B cell (primary cell): ENCODE measurements at regions of chr12 and their contacts with region 1.

Region 1: DNA sequence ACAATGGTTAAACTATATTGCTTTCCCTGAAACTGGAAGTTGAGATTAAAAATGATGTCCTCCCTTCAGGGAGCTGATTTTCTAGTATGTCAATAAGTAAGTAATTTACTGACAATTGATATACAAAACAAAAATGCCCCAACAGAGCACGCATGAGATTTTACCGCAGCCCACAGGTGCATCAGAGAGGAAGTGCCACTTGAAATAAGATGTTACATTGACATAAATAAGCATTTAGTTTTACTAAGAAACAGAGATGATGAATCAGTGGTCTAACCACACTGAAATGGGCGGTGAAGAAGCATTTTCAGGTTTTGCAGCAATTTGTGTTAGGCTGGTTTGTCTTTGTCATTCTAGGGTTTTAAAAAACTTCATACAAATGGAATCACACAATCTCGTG is 8.8 kb upstream of the CLECL1 start:
- DNase-seq: peak; percentile 86
- ATAC-seq: peak; percentile 67
- H3K4me3 ChIP-seq: peak overlapping the region in 1 of 5 experiments; percentile 29
- H3K4me3 Mint-ChIP-seq: peak overlapping the region; percentile 81
- H3K27ac ChIP-seq: peak overlapping the region; percentile 36 to 66
- H3K27ac Mint-ChIP-seq: peak overlapping the region; percentile 91
- H3K4me1 ChIP-seq: peaks cover 55 to 64% of the 10 kb centered on the region in 2 donors
- H3K4me1 Mint-ChIP-seq: peaks cover 56% of the 10 kb centered on the region
- H3K27me3 ChIP-seq: no peaks in the 10 kb centered on the region
- H3K27me3 Mint-ChIP-seq: no peaks in the 10 kb centered on the region
- CTCF ChIP-seq: no peak

Region 2: DNA sequence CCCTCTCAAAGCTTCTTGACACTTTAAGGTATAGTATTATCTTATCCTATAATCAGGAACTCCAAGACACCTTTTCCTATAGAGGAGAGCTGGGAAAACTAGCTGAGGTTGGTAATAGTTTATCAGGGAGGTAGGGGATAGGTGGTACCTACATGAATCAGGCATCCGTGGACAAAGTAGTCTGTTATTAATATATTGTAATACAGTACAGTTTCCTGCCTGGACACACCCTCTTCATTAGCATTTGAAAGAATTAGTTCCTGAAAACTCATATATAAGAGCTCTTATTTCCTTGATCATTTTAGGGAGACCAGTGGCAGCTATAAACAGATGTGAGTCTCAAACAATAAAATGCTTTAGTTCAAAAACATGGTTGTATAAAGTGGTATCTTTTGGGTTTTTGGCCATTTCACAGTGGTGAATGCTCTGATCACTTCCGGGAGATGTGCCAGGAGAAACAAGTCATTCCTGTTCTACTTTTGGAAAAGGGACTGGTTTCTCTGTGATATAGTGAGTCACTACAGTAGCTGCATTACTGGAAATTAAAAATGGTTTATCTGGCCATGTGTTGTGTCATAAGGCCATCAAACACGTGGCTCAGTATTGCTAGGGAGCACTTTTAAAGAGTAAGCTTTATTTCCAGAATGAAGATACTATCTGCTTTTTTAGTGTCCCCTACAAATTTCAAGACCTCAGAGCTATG is 232.1 kb before region 1 on chr12:
- CTCF ChIA-PET with region 1: no interaction called
- POLR2A ChIA-PET with region 1: no interaction called
- intact Hi-C with region 1: no loop called
- DNase-seq: no peak
- ATAC-seq: no peak
- H3K4me3 ChIP-seq: no peak overlapping the region
- H3K4me3 Mint-ChIP-seq: peak overlapping the region; percentile 77
- H3K27ac ChIP-seq: peak overlapping the region in 1 of 2 donors; percentile 60
- H3K27ac Mint-ChIP-seq: peak overlapping the region; percentile 94
- H3K4me1 ChIP-seq: peaks cover 0 to 23% of the 10 kb centered on the region in 2 donors
- H3K4me1 Mint-ChIP-seq: peaks cover 26% of the 10 kb centered on the region
- H3K27me3 ChIP-seq: no peaks in the 10 kb centered on the region
- H3K27me3 Mint-ChIP-seq: no peaks in the 10 kb centered on the region
- CTCF ChIP-seq: no peak

Region 3: DNA sequence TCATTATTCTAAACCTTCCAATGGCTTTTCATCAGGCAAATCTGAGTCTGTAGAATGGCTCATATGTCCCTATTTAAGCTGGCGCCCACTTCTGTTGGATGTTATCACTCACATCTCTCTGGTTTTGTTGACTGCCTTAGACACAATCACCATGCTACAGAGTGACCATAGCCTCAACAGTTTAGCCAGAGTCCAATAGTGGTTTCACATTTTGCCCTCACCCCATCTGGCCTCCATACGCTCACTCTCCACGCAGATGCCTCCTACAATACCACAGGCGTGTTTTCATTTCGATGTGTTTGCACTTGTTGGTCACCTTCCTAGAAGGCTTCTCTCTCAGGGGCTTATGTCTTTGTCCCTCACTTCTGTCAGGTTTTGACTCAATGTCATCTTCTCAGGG is 137.4 kb before region 1 on chr12:
- CTCF ChIA-PET with region 1: no interaction called
- POLR2A ChIA-PET with region 1: no interaction called
- intact Hi-C with region 1: no loop called
- DNase-seq: no peak
- ATAC-seq: no peak
- H3K4me3 ChIP-seq: no peak overlapping the region
- H3K4me3 Mint-ChIP-seq: no peak overlapping the region
- H3K27ac ChIP-seq: no peak overlapping the region
- H3K27ac Mint-ChIP-seq: no peak overlapping the region
- H3K4me1 ChIP-seq: no peaks in the 10 kb centered on the region
- H3K4me1 Mint-ChIP-seq: no peaks in the 10 kb centered on the region
- H3K27me3 ChIP-seq: no peaks in the 10 kb centered on the region
- H3K27me3 Mint-ChIP-seq: no peaks in the 10 kb centered on the region
- CTCF ChIP-seq: no peak

Region 4: GRCh38 chr12:9634177-9634803 is 107.4 kb before region 1 on chr12:
- CTCF ChIA-PET with region 1: interaction called, 113 read pairs
- POLR2A ChIA-PET with region 1: interaction called, 3 read pairs
- intact Hi-C with region 1: no loop called
- DNase-seq: peak; percentile 86
- ATAC-seq: peak; percentile 75
- H3K4me3 ChIP-seq: no peak overlapping the region
- H3K4me3 Mint-ChIP-seq: peak overlapping the region; percentile 72
- H3K27ac ChIP-seq: peak overlapping the region; percentile 1 to 82
- H3K27ac Mint-ChIP-seq: peak overlapping the region; percentile 83
- H3K4me1 ChIP-seq: peaks cover 48 to 53% of the 10 kb centered on the region in 2 donors
- H3K4me1 Mint-ChIP-seq: peaks cover 59% of the 10 kb centered on the region
- H3K27me3 ChIP-seq: no peaks in the 10 kb centered on the region
- H3K27me3 Mint-ChIP-seq: no peaks in the 10 kb centered on the region
- CTCF ChIP-seq: peak; percentile 92

Region 5: GRCh38 chr12:9673404-9674225 is 68.1 kb before region 1 on chr12:
- CTCF ChIA-PET with region 1: interaction called, 10 read pairs
- POLR2A ChIA-PET with region 1: no interaction called
- intact Hi-C with region 1: no loop called
- DNase-seq: peak; percentile 56
- ATAC-seq: peak; percentile 32
- H3K4me3 ChIP-seq: peak overlapping the region in 3 of 5 experiments; percentile 63 to 77 (median 69)
- H3K4me3 Mint-ChIP-seq: peak overlapping the region; percentile 91
- H3K27ac ChIP-seq: peak overlapping the region; percentile 28 to 87
- H3K27ac Mint-ChIP-seq: peak overlapping the region; percentile 86
- H3K4me1 ChIP-seq: peaks cover 60 to 70% of the 10 kb centered on the region in 2 donors
- H3K4me1 Mint-ChIP-seq: peaks cover 77% of the 10 kb centered on the region
- H3K27me3 ChIP-seq: no peaks in the 10 kb centered on the region
- H3K27me3 Mint-ChIP-seq: no peaks in the 10 kb centered on the region
- CTCF ChIP-seq: no peak

Region 6: DNA sequence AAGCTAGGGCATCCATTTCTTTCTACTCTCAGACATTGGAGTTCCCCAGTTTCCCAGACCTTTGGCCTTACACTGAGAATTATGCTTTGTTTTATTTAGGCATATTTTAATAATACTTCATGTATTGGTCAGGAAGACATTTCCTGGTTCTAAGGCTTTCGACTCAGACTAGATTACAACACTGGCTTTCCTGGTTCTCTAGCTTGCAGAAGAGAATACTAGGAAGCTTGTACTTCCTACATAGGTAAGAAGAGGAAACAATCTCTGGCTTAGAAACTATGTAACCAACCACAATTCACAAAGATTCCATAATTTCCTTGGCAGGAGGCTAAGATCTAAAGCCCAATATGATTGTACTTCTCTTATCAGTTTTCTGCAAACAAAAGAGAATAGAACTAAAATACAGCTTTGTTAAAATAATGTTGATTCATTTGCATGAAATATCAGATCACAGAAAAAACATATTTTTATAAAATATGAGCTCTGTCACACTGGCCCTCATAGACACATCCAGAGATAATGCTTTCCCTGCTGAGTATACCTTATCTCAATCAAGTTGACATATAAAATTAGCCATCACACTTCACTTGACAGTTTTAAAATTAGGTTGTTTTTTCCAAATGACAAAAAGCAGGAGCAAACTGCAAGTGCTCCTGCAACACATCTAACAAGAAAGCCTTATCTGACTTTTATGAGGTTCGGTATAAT is 41.7 kb before region 1 on chr12:
- CTCF ChIA-PET with region 1: interaction called, 12 read pairs
- POLR2A ChIA-PET with region 1: interaction called, 3 read pairs
- intact Hi-C with region 1: no loop called
- DNase-seq: no peak
- ATAC-seq: no peak
- H3K4me3 ChIP-seq: no peak overlapping the region
- H3K4me3 Mint-ChIP-seq: no peak overlapping the region
- H3K27ac ChIP-seq: peak overlapping the region in 1 of 2 donors; percentile 71
- H3K27ac Mint-ChIP-seq: peak overlapping the region; percentile 71
- H3K4me1 ChIP-seq: peaks cover 38 to 42% of the 10 kb centered on the region in 2 donors
- H3K4me1 Mint-ChIP-seq: peaks cover 66% of the 10 kb centered on the region
- H3K27me3 ChIP-seq: no peaks in the 10 kb centered on the region
- H3K27me3 Mint-ChIP-seq: no peaks in the 10 kb centered on the region
- CTCF ChIP-seq: no peak

Region 7: GRCh38 chr12:9721394-9722092 is 20.2 kb before region 1 on chr12:
- CTCF ChIA-PET with region 1: interaction called, 19 read pairs
- POLR2A ChIA-PET with region 1: interaction called, 9 read pairs
- intact Hi-C with region 1: loop called (anchors 2 kb)
- DNase-seq: peak; percentile 85
- ATAC-seq: peak; percentile 89
- H3K4me3 ChIP-seq: peak overlapping the region in 1 of 5 experiments; percentile 43
- H3K4me3 Mint-ChIP-seq: peak overlapping the region; percentile 60
- H3K27ac ChIP-seq: peak overlapping the region; percentile 88 to 91
- H3K27ac Mint-ChIP-seq: peak overlapping the region; percentile 85
- H3K4me1 ChIP-seq: peaks cover 71 to 94% of the 10 kb centered on the region in 2 donors
- H3K4me1 Mint-ChIP-seq: peaks cover 86% of the 10 kb centered on the region
- H3K27me3 ChIP-seq: no peaks in the 10 kb centered on the region
- H3K27me3 Mint-ChIP-seq: no peaks in the 10 kb centered on the region
- CTCF ChIP-seq: no peak

Region 8: GRCh38 chr12:9760699-9761418 is 19.1 kb after region 1 on chr12 and contains the start of gene CD69:
- CTCF ChIA-PET with region 1: interaction called, 13 read pairs
- POLR2A ChIA-PET with region 1: no interaction called
- intact Hi-C with region 1: no loop called
- DNase-seq: peak; percentile 95
- ATAC-seq: peak; percentile 59
- H3K4me3 ChIP-seq: peak within 1 kb of the TSS; percentile 46 to 100 (median 75)
- H3K4me3 Mint-ChIP-seq: peak within 1 kb of the TSS; percentile 96
- H3K27ac ChIP-seq: peak within 1 kb of the TSS; percentile 89 to 93
- H3K27ac Mint-ChIP-seq: peak within 1 kb of the TSS; percentile 99
- H3K4me1 ChIP-seq: peaks cover 58 to 63% of the 10 kb centered on the region in 2 donors
- H3K4me1 Mint-ChIP-seq: peaks cover 69% of the 10 kb centered on the region
- H3K27me3 ChIP-seq: no peaks in the 10 kb centered on the region
- H3K27me3 Mint-ChIP-seq: no peaks in the 10 kb centered on the region
- CTCF ChIP-seq: no peak
- total RNA-seq, gene CD69: 44.8 and 45.1 TPM in 2 replicates

Region 9: DNA sequence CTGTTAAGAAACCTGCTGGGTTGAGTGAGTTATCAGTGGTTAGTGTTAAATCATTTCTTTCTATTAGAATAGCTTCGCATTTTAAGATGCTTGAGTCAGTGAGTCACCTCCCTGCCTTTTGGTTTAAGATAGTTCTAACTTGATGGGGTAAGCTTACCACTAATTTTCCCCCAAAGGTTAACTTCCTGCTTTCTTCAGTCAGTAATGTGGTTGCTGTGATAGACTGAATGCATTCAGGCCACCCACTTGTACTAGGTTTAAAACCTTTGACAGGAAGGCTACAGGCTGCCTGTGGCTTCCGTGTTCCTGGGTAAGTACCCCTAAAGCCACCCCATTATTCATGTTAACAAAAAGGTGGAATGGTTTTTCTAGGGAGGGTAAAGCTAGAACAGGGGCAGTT is 165.1 kb after region 1 on chr12:
- CTCF ChIA-PET with region 1: no interaction called
- POLR2A ChIA-PET with region 1: no interaction called
- intact Hi-C with region 1: no loop called
- DNase-seq: no peak
- ATAC-seq: peak; percentile 51
- H3K4me3 ChIP-seq: no peak overlapping the region
- H3K4me3 Mint-ChIP-seq: no peak overlapping the region
- H3K27ac ChIP-seq: no peak overlapping the region
- H3K27ac Mint-ChIP-seq: no peak overlapping the region
- H3K4me1 ChIP-seq: peaks cover 3 to 4% of the 10 kb centered on the region in 2 donors
- H3K4me1 Mint-ChIP-seq: peaks cover 8% of the 10 kb centered on the region
- H3K27me3 ChIP-seq: no peaks in the 10 kb centered on the region
- H3K27me3 Mint-ChIP-seq: peaks cover 6% of the 10 kb centered on the region
- CTCF ChIP-seq: no peak